ENCODE measurements at regions of chr2 and their contacts with region 1.

Region 1: GRCh38 chr2:64960819-64961218 is 28.4 kb upstream of the SLC1A4 start:
- DNase-seq: no peak
- H3K4me3 ChIP-seq: no peak overlapping the region
- H3K27ac ChIP-seq: no peak overlapping the region
- H3K4me1 ChIP-seq: no peaks in the 10 kb centered on the region
- H3K27me3 ChIP-seq: no peaks in the 10 kb centered on the region
- CTCF ChIP-seq: no peak
- POLR2A ChIP-seq: no peak

Region 2: DNA sequence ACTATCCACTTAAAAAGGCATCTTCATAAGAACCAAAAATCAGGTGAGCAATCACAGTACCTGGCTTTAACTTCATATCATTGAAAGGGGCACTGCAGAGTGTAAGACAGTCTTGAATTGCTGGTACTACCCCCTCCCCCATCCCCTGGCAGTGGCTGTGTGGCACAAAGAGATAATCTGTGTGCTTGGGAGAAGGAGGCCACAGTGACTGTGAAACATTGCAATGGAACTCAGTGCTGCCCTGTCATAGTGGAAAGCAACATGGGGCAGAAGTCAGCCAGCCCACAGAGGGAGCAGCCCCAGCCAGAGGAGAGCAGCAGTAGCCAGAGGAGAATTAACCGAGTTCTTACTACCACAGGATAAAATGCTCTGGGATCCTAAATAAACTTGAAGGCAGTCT is 1164.5 kb before region 1 on chr2:
- intact Hi-C with region 1: no loop called
- DNase-seq: no peak
- H3K4me3 ChIP-seq: no peak overlapping the region
- H3K27ac ChIP-seq: no peak overlapping the region
- H3K4me1 ChIP-seq: no peaks in the 10 kb centered on the region
- H3K27me3 ChIP-seq: no peaks in the 10 kb centered on the region
- CTCF ChIP-seq: no peak
- POLR2A ChIP-seq: no peak

Region 3: GRCh38 chr2:64931246-64932115 is 29.3 kb before region 1 on chr2:
- intact Hi-C with region 1: loop called (anchors 2 kb)
- DNase-seq: no peak
- H3K4me3 ChIP-seq: no peak overlapping the region
- H3K27ac ChIP-seq: no peak overlapping the region
- H3K4me1 ChIP-seq: no peaks in the 10 kb centered on the region
- H3K27me3 ChIP-seq: no peaks in the 10 kb centered on the region
- CTCF ChIP-seq: no peak
- POLR2A ChIP-seq: no peak

Measured in breast epithelium (tissue), 4 donors.